OCI-LY7 (cell line): ENCODE measurements at regions of chr11 and their contacts with region 1.

Region 1: GRCh38 chr11:84833488-84834088 is 793.6 kb downstream of the DLG2 start:
- DNase-seq: no peak
- H3K4me3 ChIP-seq: no peak overlapping the region
- H3K27ac ChIP-seq: no peak overlapping the region
- H3K4me1 ChIP-seq: no peaks in the 10 kb centered on the region
- CTCF ChIP-seq: no peak

Region 2: DNA sequence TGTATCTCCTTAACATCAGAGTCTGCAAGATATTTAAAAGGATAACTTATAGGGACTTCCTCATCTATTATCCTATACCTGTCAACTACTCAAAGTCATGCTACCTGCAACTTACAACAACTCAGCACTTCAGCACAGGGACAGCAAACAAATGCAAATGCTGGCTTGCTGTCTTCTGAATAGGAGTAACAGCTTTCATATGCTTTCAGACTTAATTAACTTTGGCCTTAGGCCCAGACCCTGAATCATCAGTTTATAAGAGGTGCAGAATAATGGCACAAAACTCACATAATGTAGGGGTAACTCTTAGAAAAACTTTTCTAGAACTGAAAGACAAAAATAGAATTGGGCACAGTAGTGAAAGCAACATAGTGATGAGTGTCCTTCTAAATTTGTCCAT is 159.8 kb before region 1 on chr11:
- CTCF ChIA-PET with region 1: no interaction called
- POLR2A ChIA-PET with region 1: no interaction called
- intact Hi-C with region 1: no loop called
- DNase-seq: no peak
- H3K4me3 ChIP-seq: no peak overlapping the region
- H3K27ac ChIP-seq: no peak overlapping the region
- H3K4me1 ChIP-seq: no peaks in the 10 kb centered on the region
- CTCF ChIP-seq: no peak

Region 3: GRCh38 chr11:84714316-84714780 is 119.2 kb before region 1 on chr11:
- CTCF ChIA-PET with region 1: no interaction called
- POLR2A ChIA-PET with region 1: no interaction called
- intact Hi-C with region 1: no loop called
- DNase-seq: peak; percentile 71
- H3K4me3 ChIP-seq: no peak overlapping the region
- H3K27ac ChIP-seq: no peak overlapping the region
- H3K4me1 ChIP-seq: no peaks in the 10 kb centered on the region
- CTCF ChIP-seq: peak; percentile 71

Region 4: GRCh38 chr11:84847842-84848241 is 14.3 kb after region 1 on chr11:
- CTCF ChIA-PET with region 1: no interaction called
- POLR2A ChIA-PET with region 1: interaction called, 5 read pairs
- intact Hi-C with region 1: loop called (anchors 1 kb)
- DNase-seq: no peak
- H3K4me3 ChIP-seq: no peak overlapping the region
- H3K27ac ChIP-seq: no peak overlapping the region
- H3K4me1 ChIP-seq: no peaks in the 10 kb centered on the region
- CTCF ChIP-seq: no peak